ENCODE measurements at regions of chr7 and their contacts with region 1.

Region 1: DNA sequence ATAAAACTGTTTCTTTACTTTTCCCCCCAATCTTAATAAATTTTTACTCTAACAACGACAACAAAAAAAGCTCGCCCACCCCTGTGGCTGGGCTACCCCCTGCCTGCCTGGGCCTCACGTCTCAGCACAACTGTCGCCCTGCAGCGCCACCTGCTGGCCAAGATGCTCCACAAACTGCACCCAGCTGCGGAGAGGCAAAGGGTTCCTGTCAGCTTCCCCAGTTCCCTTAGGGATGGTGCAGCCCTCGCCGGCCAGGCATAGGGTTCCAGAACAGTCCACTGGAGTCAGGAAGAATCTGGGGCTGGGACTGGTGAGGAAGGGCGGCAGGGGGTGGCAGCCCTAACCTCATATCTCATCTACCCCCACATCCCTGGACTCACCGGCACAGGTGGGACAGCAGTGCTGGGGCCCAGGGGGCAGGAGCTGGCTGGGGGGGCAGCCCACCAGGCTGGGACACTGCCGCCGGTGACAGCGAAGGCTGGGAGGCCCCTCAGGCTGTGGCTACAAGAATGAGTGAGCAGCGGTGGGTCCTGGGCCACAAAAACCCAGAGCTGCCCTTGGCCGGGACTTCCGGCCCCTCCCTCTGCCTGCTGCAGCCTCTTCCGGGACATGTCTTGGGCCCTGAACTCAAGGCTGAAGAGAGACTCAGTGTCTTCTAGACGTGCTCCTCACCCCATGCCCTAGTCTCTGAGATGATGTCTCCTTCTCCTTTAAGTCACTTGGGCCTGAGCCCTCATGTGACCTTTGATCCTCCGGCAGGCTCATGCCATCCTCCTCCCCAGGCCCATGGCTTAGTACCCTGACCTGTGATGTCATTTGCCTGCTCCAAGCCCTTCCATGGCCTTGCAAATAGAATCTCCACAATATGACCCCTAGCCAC is 21.2 kb downstream of the ATP6V1F start:
- DNase-seq: peak; percentile 69
- H3K27ac ChIP-seq: no peak overlapping the region
- CTCF ChIP-seq: peak; percentile 98

Region 2: GRCh38 chr7:128681794-128682537 is 201.9 kb before region 1 on chr7:
- CTCF ChIA-PET with region 1: interaction called, 10 read pairs
- POLR2A ChIA-PET with region 1: no interaction called
- DNase-seq: no peak
- H3K27ac ChIP-seq: no peak overlapping the region
- CTCF ChIP-seq: no peak

Region 3: GRCh38 chr7:128855559-128855958 is 28.3 kb before region 1 on chr7:
- CTCF ChIA-PET with region 1: no interaction called
- POLR2A ChIA-PET with region 1: no interaction called
- DNase-seq: no peak
- H3K27ac ChIP-seq: no peak overlapping the region
- CTCF ChIP-seq: no peak

Measured in RWPE1 (cell line).